AG04450 (cell line): ENCODE measurements at regions of chr12 and their contacts with region 1.

Region 1: DNA sequence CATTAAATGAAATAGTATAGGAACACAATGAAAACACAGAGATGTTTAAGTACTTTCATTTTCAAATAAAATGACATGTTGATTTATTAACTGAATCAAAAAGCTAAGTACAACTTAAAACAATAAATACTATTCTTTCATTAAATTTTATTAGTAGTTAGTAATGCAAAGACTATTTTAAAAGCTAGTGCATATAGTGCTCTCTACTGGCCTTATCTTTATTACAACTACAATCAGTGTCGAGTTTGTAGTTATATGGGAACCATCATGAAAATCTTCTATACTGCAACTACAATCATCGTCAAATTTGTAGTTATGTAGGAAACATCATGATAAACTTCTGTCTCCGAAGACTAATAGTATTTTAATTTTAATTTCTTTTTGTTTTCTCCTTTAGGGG is 8.9 kb upstream of the LIN7A start:
- DNase-seq: no peak
- H3K4me3 ChIP-seq: no peak overlapping the region
- H3K27ac ChIP-seq: no peak overlapping the region
- H3K27me3 ChIP-seq: no peaks in the 10 kb centered on the region
- CTCF ChIP-seq: peak; percentile 55

Region 2: GRCh38 chr12:80320121-80320678 is 626.4 kb before region 1 on chr12:
- CTCF ChIA-PET with region 1: interaction called, 13 read pairs
- POLR2A ChIA-PET with region 1: no interaction called
- DNase-seq: no peak
- H3K4me3 ChIP-seq: no peak overlapping the region
- H3K27ac ChIP-seq: no peak overlapping the region
- H3K27me3 ChIP-seq: no peaks in the 10 kb centered on the region
- CTCF ChIP-seq: no peak